Posterior cingulate gyrus (tissue), 11 donors: ENCODE measurements at regions of chr15 and their contacts with region 1.

Region 1: DNA sequence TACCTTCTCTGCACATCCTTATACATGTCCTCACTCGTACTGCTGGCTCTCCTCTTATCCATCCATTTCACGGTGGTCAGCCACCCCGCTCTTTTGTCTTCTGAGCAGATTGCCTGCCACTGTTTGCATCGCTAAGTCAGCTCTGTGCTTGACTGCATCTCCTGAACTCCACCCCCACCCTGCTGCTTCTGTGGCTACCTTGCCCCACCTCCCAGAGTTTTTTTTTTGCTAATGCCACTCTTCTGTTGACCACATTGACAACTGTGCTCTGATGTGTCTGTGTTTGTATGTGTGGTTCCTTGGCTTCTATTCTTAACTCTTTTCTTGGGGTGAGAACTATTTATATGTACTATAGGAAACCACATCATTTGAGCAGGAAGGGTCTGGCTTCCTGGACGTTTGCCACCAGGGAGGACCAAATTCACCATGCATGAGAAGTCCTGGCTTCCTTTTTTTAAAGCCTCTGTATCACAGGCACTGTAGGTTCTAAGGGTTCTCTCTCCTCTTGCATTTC is 12.8 kb upstream of the MTMR10 start:
- DNase-seq: no peak

Region 2: GRCh38 chr15:30940359-30940758 is 63.9 kb before region 1 on chr15:
- intact Hi-C with region 1: loop called (anchors 10 kb)
- DNase-seq: no peak

Region 3: DNA sequence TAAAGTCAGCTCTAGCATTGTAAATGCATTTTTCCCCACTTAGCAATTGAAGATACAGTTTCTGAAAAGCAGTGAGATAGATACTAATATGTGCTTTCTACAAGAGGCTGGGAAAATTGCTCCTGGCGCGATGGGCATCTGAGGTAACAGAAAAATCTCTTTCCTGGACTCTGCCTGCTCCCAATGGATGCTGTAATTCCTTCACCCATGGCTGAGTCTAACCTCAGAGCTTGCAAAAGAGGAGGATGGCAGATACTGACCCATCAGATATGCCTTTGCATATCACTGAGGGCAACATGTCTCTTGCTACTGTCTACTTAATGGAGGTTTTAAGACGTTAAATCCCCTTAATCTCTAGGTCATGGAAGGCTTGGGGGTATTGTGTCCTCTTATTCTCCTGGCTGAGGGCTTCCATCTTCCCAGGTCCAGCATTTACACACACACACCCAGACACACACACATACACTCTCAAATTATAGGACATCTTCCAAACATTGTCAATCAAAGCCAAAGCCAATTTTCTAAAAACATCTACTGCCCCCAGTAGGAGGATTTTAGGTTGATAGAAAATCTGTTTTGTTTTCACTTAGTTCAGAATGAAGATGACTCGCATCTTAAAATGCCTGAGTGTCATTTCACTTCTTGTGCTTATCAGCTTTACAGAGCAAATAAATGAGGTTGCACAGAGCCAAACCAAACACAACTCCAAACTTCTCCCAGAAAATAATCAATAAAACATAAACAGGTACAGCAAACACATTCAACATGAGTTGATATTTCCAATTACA is 94.9 kb after region 1 on chr15:
- intact Hi-C with region 1: loop called (anchors 10 kb)
- DNase-seq: no peak